H1 (cell line): ENCODE measurements at regions of chr9 and their contacts with region 1.

Region 1: DNA sequence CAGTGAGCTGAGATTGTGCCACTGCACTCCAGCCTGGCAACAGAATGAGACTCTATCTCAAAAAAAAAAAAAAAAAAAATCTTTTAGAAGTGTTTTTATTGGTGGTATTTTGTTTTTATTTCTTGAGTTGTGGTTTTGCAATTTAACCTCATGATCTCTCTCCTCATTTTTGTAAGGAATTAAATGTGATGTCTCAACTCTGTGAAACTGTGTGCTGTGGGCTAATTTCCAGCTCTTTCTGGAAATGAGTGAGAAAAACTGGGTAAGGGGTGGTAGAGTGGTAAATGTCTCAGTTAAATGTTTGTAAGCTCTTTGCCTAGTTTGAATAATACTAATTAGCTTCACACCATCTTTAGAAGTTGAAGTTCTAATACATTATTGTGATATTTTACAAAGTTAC is 29.0 kb downstream of the ACO1 start:
- DNase-seq: no peak
- H3K4me3 ChIP-seq: no peak overlapping the region
- H3K27ac ChIP-seq: no peak overlapping the region
- H3K4me1 ChIP-seq: no peaks in the 10 kb centered on the region
- H3K27me3 ChIP-seq: no peaks in the 10 kb centered on the region
- CTCF ChIP-seq: no peak
- EP300 ChIP-seq: no peak
- POLR2A ChIP-seq: no peak
- RAD21 ChIP-seq: no peak

Region 2: GRCh38 chr9:31983895-31984294 is 429.5 kb before region 1 on chr9:
- CTCF ChIA-PET with region 1: no interaction called
- POLR2A ChIA-PET with region 1: no interaction called
- DNase-seq: no peak
- H3K4me3 ChIP-seq: no peak overlapping the region
- H3K27ac ChIP-seq: no peak overlapping the region
- H3K4me1 ChIP-seq: no peaks in the 10 kb centered on the region
- H3K27me3 ChIP-seq: no peaks in the 10 kb centered on the region
- CTCF ChIP-seq: no peak
- EP300 ChIP-seq: no peak
- POLR2A ChIP-seq: no peak
- RAD21 ChIP-seq: no peak

Region 3: DNA sequence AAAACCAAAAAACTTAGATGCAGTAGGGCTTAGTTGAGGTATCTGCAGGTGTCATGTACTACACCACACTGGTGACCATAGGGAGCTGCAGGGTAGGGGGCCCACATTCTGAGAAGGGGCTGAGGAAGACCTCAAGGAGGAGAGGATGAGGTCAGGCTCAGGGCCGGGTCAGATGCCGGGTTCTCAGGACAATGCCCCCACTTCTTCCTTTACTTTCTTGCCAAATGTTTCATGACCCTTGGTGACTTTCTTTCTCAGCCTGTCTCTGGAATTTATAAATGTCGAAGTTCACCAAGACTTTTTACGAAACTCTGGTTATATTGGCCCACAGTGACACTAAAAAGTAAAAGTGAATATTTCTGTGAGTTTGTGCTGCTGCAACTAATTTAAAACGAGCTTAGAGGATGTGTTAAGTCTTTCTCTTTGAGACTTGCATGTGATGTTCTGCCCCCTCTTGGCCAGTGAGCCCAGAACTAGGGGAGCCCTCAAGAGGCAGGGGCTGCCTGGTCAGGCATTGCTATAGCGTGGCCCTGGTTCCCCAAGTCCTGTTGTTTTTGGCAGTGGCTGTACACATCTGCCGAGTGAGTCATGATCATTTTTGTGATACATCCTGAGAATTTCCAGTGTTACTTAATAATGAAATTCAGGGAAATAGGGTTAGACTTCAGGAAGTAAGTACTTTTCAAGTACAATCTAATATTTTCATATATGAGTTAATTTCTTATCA is 17.8 kb before region 1 on chr9:
- CTCF ChIA-PET with region 1: interaction called, 13 read pairs
- POLR2A ChIA-PET with region 1: interaction called, 3 read pairs
- DNase-seq: no peak
- H3K4me3 ChIP-seq: no peak overlapping the region
- H3K27ac ChIP-seq: no peak overlapping the region
- H3K4me1 ChIP-seq: peaks cover 0 to 7% (median 3%) of the 10 kb centered on the region in 4 experiments; a peak in 4 of 7 replicates
- H3K27me3 ChIP-seq: no peaks in the 10 kb centered on the region
- CTCF ChIP-seq: peak in 2 of 3 experiments; percentile 22 to 46; a peak in 2 of 4 replicates
- EP300 ChIP-seq: no peak
- POLR2A ChIP-seq: no peak
- RAD21 ChIP-seq: peak in 1 of 2 experiments; percentile 13; a peak in 1 of 4 replicates